Activated CD4-positive, alpha-beta memory T cell treated with anti-CD3 and anti-CD28 coated beads for 36 hours (primary cell): ENCODE measurements at regions of chr2 and their contacts with region 1.

Region 1: GRCh38 chr2:200578778-200579177 is 7.0 kb upstream of the AOX1 start:
- DNase-seq: no peak
- H3K4me3 Mint-ChIP-seq: no peak overlapping the region
- H3K27ac Mint-ChIP-seq: no peak overlapping the region
- H3K4me1 Mint-ChIP-seq: peaks cover 12% of the 10 kb centered on the region
- H3K27me3 Mint-ChIP-seq: no peaks in the 10 kb centered on the region

Region 2: DNA sequence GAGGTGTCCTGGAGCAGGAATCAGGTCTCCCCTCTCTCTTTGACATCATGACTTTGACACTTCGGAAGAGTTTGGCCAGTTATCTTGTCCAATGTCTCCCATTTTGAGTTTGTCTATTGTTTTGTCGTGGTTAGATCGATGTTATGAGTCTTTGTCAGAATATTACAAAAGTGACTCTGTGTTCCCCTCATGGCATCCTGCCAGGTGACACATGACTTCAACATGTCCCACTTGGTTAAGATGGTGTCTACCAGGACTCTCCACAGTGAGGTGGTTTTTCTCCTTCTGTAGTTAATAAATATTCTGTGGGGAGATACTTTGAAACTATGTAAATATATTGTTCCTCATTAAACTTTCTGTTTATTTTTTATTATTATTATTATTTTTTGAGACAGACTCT is 156.3 kb after region 1 on chr2:
- CTCF ChIA-PET with region 1: interaction called, 8 read pairs
- POLR2A ChIA-PET with region 1: no interaction called
- intact Hi-C with region 1: loop called (anchors 2 kb)
- DNase-seq: peak; percentile 53
- H3K4me3 Mint-ChIP-seq: no peak overlapping the region
- H3K27ac Mint-ChIP-seq: no peak overlapping the region
- H3K4me1 Mint-ChIP-seq: peaks cover 12% of the 10 kb centered on the region
- H3K27me3 Mint-ChIP-seq: peaks cover 4% of the 10 kb centered on the region

Region 3: DNA sequence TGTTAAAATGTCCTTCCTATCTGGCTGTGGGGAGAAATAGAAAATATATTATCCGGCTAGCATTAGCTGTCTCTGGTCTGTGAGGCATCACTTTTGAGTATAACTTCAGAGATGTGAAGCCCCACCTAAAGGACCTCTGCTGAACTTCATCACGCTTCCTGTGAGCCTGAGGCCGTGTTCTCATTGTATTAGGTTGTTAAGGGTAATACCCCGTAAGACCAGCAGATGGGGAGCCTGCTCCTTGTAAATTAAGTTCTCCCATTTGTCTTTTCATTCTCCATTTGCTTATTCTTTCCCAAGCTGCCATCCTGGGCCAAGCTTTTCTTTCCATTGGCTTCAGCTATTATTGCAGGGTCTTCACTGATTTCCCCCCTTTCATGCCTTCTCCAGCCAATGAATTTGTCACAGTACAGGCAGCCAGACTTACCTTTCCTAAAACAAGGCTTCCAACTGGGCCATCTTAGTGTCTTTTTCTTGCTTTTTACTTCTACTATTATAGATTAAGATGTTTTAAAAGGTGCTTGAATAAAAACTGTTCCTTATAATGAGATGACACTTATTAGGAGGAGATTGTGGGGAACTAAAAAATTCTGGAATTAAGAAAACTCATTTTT is 322.8 kb after region 1 on chr2:
- CTCF ChIA-PET with region 1: no interaction called
- POLR2A ChIA-PET with region 1: no interaction called
- intact Hi-C with region 1: loop called (anchors 2 kb)
- DNase-seq: peak; percentile 79
- H3K4me3 Mint-ChIP-seq: no peak overlapping the region
- H3K27ac Mint-ChIP-seq: peak overlapping the region; percentile 69
- H3K4me1 Mint-ChIP-seq: peaks cover 9% of the 10 kb centered on the region
- H3K27me3 Mint-ChIP-seq: no peaks in the 10 kb centered on the region

Region 4: DNA sequence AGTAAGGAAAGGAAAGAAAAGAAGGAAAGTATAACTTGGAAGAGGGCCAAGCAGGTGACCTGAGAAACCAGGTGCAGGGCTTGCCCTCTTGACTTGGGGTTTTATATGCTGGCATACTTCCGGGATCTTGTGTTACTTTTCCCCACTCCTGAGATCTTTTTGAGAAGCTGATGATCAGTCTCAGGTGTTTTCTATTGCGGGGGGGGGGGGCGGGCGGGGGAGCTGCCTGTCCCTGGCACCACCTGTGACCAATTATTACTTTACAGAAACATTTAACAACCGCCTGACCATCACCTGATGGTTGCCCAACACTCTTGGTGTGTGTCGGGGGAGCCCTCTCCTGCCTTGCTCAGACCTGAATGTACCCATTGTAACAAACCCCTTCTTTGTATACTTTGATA is 597.3 kb after region 1 on chr2:
- CTCF ChIA-PET with region 1: interaction called, 3 read pairs
- POLR2A ChIA-PET with region 1: no interaction called
- intact Hi-C with region 1: loop called (anchors 5 kb)
- DNase-seq: no peak
- H3K4me3 Mint-ChIP-seq: no peak overlapping the region
- H3K27ac Mint-ChIP-seq: no peak overlapping the region
- H3K4me1 Mint-ChIP-seq: peaks cover 16% of the 10 kb centered on the region
- H3K27me3 Mint-ChIP-seq: no peaks in the 10 kb centered on the region